ENCODE measurements at regions of chr16 and their contacts with region 1.

Region 1: DNA sequence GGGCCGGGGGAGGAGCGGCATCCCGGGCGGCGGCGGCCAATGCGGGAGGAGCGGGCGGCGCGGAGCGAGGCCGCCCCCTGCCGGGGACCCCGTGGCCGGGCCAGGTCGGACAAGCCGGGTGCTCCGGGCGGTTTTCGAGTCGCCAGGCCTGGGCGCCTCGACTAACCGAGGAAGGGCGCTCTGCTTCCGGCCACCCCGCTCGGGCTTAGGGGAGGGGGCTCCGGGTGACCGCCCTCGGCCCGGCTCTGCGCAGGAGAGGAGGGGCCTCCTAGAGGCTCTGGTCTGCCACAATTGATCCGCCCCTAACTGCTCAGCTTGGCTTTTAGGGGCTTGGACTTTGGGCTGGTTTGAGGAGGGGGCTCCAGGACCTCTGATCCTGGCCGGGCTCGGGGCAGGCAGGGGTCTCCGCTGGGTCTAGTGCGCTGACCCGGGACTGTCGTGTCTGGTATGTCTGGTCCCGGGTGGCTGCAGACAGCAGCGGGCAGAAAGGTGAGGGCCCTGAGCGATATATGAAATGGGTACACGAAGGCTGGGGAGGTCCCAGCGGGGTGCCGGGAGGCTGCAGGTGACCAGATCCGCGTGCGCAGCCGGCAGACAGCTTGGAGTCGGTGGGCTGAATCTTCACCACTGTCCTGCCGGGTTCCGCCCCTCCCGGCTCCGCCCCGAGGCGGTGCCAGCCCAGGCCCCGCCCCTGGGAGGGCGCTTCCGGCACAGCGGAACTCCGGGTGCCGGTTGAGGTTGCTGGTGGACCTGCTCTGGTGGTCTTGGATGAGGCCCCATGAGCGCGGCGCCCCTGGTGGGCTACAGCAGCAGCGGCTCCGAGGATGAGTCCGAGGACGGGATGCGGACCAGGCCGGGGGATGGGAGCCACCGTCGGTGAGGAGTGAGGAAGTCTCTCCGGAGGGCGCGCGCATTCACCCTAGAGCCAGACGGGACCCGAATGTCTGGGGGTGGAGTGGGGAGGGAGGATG is at the start of gene USB1:
- DNase-seq: peak; percentile 81
- H3K4me3 Mint-ChIP-seq: peak within 1 kb of the TSS; percentile 91
- H3K27ac Mint-ChIP-seq: peak within 1 kb of the TSS; percentile 93
- H3K4me1 Mint-ChIP-seq: peaks cover 57% of the 10 kb centered on the region
- H3K27me3 Mint-ChIP-seq: no peaks in the 10 kb centered on the region
- total RNA-seq, gene USB1: 52.0 to 58.0 TPM

Region 2: DNA sequence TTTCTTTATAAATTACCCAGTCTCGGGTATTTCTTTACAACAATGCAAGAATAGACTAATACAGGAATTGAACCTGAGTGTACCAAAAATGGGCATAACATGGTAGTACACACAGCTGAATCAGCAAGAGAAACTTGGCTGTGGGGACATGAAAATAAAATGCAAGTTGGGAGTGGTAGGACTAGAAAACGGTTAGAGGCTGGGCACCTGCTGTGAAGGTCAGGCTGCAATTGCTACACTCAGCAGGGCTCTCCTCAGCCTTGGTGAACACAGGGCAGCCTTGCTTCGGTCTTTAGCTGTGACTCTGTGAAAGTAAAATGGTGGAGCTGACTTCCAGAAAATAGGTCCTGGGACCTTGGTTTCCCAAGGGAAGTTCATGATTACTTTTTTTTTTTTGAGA is 75.7 kb before region 1 on chr16:
- CTCF ChIA-PET with region 1: no interaction called
- POLR2A ChIA-PET with region 1: no interaction called
- DNase-seq: no peak
- H3K4me3 Mint-ChIP-seq: no peak overlapping the region
- H3K27ac Mint-ChIP-seq: no peak overlapping the region
- H3K4me1 Mint-ChIP-seq: no peaks in the 10 kb centered on the region
- H3K27me3 Mint-ChIP-seq: peaks cover 9% of the 10 kb centered on the region

Region 3: DNA sequence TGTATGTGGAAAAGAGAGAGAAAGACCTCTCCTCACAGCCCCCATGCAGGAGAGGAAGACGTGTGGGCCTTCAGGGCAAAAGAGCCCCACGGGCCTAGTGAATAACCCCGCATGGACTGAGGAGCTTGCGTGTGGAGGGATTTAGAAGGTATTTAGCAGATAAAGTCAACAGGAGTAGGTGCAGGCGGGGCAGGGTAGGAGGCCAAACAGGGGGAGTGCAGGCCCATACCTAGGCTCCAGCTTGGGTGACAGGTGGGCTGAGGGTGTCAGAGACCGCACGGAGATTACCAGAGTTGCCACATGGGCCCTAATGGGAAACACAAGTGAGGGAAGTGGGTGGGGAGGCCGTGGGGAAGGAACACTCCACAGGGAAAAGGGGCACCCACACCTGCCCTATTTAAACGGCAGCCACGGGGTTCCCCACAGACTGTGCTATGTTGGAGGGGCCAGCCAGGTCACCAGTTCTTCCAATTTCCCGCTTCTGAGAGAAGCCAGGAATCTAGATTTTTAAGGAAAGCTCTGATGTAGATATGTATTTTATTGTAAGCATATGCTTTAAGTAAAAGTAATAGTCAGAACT is 21.9 kb before region 1 on chr16:
- CTCF ChIA-PET with region 1: interaction called, 11 read pairs
- POLR2A ChIA-PET with region 1: no interaction called
- DNase-seq: no peak
- H3K4me3 Mint-ChIP-seq: no peak overlapping the region
- H3K27ac Mint-ChIP-seq: no peak overlapping the region
- H3K4me1 Mint-ChIP-seq: peaks cover under 1% of the 10 kb centered on the region
- H3K27me3 Mint-ChIP-seq: peaks cover 5% of the 10 kb centered on the region